ENCODE measurements at regions of chr4 and their contacts with region 1.

Region 1: GRCh38 chr4:188372826-188373225 is 233.6 kb downstream of the TRIML1 start:
- DNase-seq: peak; percentile 88 to 90
- H3K4me3 ChIP-seq: no peak overlapping the region
- H3K4me3 Mint-ChIP-seq: no peak overlapping the region
- H3K27ac Mint-ChIP-seq: no peak overlapping the region
- H3K4me1 ChIP-seq: peaks cover 14% of the 10 kb centered on the region
- H3K4me1 Mint-ChIP-seq: peaks cover 3% of the 10 kb centered on the region
- H3K27me3 ChIP-seq: no peaks in the 10 kb centered on the region
- H3K27me3 Mint-ChIP-seq: no peaks in the 10 kb centered on the region
- CTCF ChIP-seq: peak; percentile 69 to 83

Region 2: GRCh38 chr4:187666697-187667494 is 705.9 kb before region 1 on chr4:
- CTCF ChIA-PET with region 1: no interaction called
- POLR2A ChIA-PET with region 1: no interaction called
- intact Hi-C with region 1: loop called (anchors 1 kb)
- DNase-seq: no peak
- H3K4me3 ChIP-seq: no peak overlapping the region
- H3K4me3 Mint-ChIP-seq: no peak overlapping the region
- H3K27ac Mint-ChIP-seq: no peak overlapping the region
- H3K4me1 ChIP-seq: no peaks in the 10 kb centered on the region
- H3K4me1 Mint-ChIP-seq: no peaks in the 10 kb centered on the region
- H3K27me3 ChIP-seq: no peaks in the 10 kb centered on the region
- H3K27me3 Mint-ChIP-seq: no peaks in the 10 kb centered on the region
- CTCF ChIP-seq: no peak

Region 3: GRCh38 chr4:187929024-187929423 is 443.8 kb before region 1 on chr4:
- CTCF ChIA-PET with region 1: no interaction called
- POLR2A ChIA-PET with region 1: no interaction called
- intact Hi-C with region 1: loop called (anchors 1 kb)
- DNase-seq: peak; percentile 26 to 46
- H3K4me3 ChIP-seq: no peak overlapping the region
- H3K4me3 Mint-ChIP-seq: no peak overlapping the region
- H3K27ac Mint-ChIP-seq: peak overlapping the region; percentile 49
- H3K4me1 ChIP-seq: peaks cover 17% of the 10 kb centered on the region
- H3K4me1 Mint-ChIP-seq: peaks cover 7% of the 10 kb centered on the region
- H3K27me3 ChIP-seq: no peaks in the 10 kb centered on the region
- H3K27me3 Mint-ChIP-seq: no peaks in the 10 kb centered on the region
- CTCF ChIP-seq: peak in 1 of 2 experiments; percentile 43

Region 4: DNA sequence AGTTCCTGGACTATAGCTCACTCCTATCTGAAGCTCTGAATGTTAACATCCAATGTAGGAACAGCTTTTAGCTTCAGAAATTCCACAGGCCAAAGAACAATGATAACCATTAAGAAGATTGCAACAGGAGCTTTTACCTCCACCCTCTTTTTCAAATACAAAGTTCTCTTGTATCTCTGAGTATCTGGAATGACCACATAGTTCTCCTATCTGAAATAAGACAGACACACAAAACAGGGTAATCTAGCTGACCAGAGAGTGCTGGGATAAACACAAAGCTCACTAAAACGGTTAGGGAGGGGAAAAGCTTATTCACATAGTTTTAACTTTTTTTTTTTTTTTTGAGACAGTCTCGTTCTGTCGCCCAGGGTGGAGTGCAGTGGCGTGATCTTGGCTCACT is 291.4 kb before region 1 on chr4:
- CTCF ChIA-PET with region 1: no interaction called
- POLR2A ChIA-PET with region 1: no interaction called
- intact Hi-C with region 1: loop called (anchors 1 kb)
- DNase-seq: peak; percentile 58 to 67
- H3K4me3 ChIP-seq: no peak overlapping the region
- H3K4me3 Mint-ChIP-seq: peak overlapping the region; percentile 56
- H3K27ac Mint-ChIP-seq: peak overlapping the region; percentile 91
- H3K4me1 ChIP-seq: peaks cover 38% of the 10 kb centered on the region
- H3K4me1 Mint-ChIP-seq: peaks cover 26% of the 10 kb centered on the region
- H3K27me3 ChIP-seq: no peaks in the 10 kb centered on the region
- H3K27me3 Mint-ChIP-seq: no peaks in the 10 kb centered on the region
- CTCF ChIP-seq: no peak

Region 5: DNA sequence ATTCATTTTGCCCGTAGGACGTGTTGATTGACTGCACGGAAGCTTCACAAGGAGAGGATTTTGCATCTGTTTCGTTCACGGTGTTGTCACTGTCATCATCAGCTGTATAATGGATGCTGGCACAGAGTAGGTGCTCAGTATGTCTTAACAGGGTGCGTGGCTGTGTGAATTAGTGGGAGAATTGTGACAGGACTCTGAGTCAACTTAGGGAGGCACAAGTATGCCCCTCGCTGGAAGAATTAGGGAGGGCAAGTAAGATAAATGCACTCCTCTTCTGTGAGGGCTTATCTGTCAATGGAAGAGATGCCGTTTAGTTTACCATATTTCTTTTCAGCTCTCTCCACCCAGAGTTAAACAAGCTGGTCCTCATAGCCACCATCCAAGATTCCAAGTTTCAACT is 126.3 kb before region 1 on chr4:
- CTCF ChIA-PET with region 1: no interaction called
- POLR2A ChIA-PET with region 1: no interaction called
- intact Hi-C with region 1: loop called (anchors 1 kb)
- DNase-seq: peak in 1 of 2 experiments; percentile 5
- H3K4me3 ChIP-seq: no peak overlapping the region
- H3K4me3 Mint-ChIP-seq: no peak overlapping the region
- H3K27ac Mint-ChIP-seq: no peak overlapping the region
- H3K4me1 ChIP-seq: no peaks in the 10 kb centered on the region
- H3K4me1 Mint-ChIP-seq: no peaks in the 10 kb centered on the region
- H3K27me3 ChIP-seq: no peaks in the 10 kb centered on the region
- H3K27me3 Mint-ChIP-seq: no peaks in the 10 kb centered on the region
- CTCF ChIP-seq: peak in 1 of 2 experiments; percentile 15